Mucosa of descending colon (tissue), 3 donors: ENCODE measurements at regions of chr2 and their contacts with region 1.

Region 1: GRCh38 chr2:236073246-236073645 is 94.9 kb downstream of the GBX2 start:
- DNase-seq: no peak
- ATAC-seq: no peak
- H3K4me3 ChIP-seq: no peak overlapping the region
- H3K4me1 ChIP-seq: peaks cover 11% of the 10 kb centered on the region
- CTCF ChIP-seq: no peak

Region 2: DNA sequence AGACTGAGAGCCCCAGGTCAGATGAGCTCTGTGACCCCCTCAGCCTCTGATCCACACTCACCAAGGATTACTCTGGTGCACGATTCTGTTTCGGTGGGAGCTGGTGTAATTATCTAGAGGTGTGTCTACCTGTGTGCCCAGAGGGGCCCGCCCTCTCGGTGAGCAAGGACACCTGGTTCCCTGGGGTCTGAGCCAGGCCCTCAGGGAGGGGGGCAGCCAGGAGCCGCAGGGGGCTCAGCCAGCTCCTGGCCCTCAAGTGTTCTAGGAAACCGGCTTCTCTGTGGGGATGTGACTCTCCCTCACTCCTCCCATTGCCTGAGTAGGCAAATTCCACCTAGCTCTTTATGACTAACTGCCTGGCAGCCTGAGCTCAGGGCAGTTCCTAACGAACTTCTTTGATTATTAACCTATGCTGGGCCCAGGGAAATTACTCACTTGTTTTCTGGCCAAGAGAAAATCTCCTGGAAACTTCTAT is 562.0 kb before region 1 on chr2:
- intact Hi-C with region 1: loop called in 1 of 2 experiments (anchors 10 kb)
- DNase-seq: peak; percentile 80 to 86 (median 81)
- ATAC-seq: peak; percentile 74
- H3K4me3 ChIP-seq: no peak overlapping the region
- H3K4me1 ChIP-seq: peaks cover 56% of the 10 kb centered on the region
- CTCF ChIP-seq: no peak

Region 3: GRCh38 chr2:235981631-235982030 is 91.6 kb before region 1 on chr2:
- intact Hi-C with region 1: no loop called
- DNase-seq: no peak
- ATAC-seq: no peak
- H3K4me3 ChIP-seq: no peak overlapping the region
- H3K4me1 ChIP-seq: no peaks in the 10 kb centered on the region
- CTCF ChIP-seq: no peak